OCI-LY7 (cell line): ENCODE measurements at regions of chr1 and their contacts with region 1.

Region 1: GRCh38 chr1:196148367-196148970 is 459.8 kb downstream of the KCNT2 start:
- DNase-seq: peak; percentile 29
- H3K4me3 ChIP-seq: no peak overlapping the region
- H3K27ac ChIP-seq: no peak overlapping the region
- H3K4me1 ChIP-seq: no peaks in the 10 kb centered on the region
- CTCF ChIP-seq: peak; percentile 87

Region 2: DNA sequence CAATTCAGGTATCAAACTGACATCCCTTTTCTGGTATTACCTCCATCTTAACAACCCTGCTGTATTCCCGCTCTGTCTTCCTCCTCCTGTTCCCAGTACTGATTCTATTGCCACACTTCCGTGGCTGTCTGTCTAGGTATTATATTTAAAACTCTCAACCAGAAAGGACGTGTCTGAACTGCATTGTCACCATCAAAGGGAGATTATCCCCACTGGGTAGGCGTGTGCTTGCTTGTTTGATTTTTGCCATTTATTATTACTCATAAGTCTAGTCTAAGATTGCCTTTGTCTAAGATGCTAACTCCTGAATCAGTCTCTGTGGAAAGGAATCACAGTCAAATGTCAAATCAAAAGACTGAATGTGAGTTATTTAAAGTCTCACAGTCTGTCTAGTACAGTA is 190.3 kb before region 1 on chr1:
- CTCF ChIA-PET with region 1: no interaction called
- POLR2A ChIA-PET with region 1: no interaction called
- intact Hi-C with region 1: no loop called
- DNase-seq: no peak
- H3K4me3 ChIP-seq: no peak overlapping the region
- H3K27ac ChIP-seq: no peak overlapping the region
- H3K4me1 ChIP-seq: no peaks in the 10 kb centered on the region
- CTCF ChIP-seq: no peak

Region 3: DNA sequence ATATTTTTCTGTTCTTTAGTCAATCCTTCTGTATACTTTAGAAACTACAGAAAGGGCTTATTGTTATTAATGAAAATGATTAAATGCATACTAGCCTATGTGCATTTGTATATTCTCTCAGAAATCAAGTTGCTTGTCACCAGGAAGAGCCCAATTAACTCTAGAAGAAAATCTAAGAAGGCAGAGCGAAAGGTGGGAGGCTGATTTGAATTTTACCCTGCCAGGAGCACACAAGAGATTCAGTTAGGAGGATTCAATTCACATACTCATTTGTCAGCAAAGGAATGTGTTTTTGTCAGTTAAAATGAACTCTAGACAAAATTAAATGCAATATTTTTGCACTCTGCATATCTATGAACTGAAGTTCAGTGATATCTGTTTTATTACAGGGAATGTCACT is 48.0 kb after region 1 on chr1:
- CTCF ChIA-PET with region 1: no interaction called
- POLR2A ChIA-PET with region 1: no interaction called
- intact Hi-C with region 1: no loop called
- DNase-seq: no peak
- H3K4me3 ChIP-seq: no peak overlapping the region
- H3K27ac ChIP-seq: no peak overlapping the region
- H3K4me1 ChIP-seq: no peaks in the 10 kb centered on the region
- CTCF ChIP-seq: no peak

Region 4: GRCh38 chr1:196209983-196210382 is 61.5 kb after region 1 on chr1:
- CTCF ChIA-PET with region 1: no interaction called
- POLR2A ChIA-PET with region 1: no interaction called
- intact Hi-C with region 1: no loop called
- DNase-seq: no peak
- H3K4me3 ChIP-seq: no peak overlapping the region
- H3K27ac ChIP-seq: no peak overlapping the region
- H3K4me1 ChIP-seq: no peaks in the 10 kb centered on the region
- CTCF ChIP-seq: no peak

Region 5: DNA sequence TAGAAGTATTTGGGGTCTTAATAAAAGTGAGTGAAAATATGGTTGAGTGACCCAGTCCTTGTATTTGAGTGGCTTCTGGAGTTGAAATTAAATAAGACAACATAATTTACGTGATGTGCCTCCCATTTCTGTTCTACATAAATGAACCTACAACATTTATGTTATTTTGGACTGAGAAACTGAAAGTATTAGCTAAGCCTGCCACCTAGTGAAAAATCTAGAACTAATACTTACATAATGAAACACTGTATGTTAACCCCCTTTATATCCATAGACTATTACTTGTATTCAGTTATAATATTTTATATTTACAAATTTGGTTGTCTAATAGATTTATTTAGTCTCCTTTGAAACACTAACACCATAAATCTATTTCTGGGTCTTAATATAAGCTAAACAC is 160.9 kb after region 1 on chr1:
- CTCF ChIA-PET with region 1: interaction called, 8 read pairs
- POLR2A ChIA-PET with region 1: interaction called, 3 read pairs
- intact Hi-C with region 1: loop called (anchors 1 kb)
- DNase-seq: peak; percentile 37
- H3K4me3 ChIP-seq: no peak overlapping the region
- H3K27ac ChIP-seq: no peak overlapping the region
- H3K4me1 ChIP-seq: no peaks in the 10 kb centered on the region
- CTCF ChIP-seq: peak; percentile 70

Region 6: GRCh38 chr1:196376630-196377328 is 228.3 kb after region 1 on chr1:
- CTCF ChIA-PET with region 1: no interaction called
- POLR2A ChIA-PET with region 1: no interaction called
- intact Hi-C with region 1: loop called (anchors 5 kb)
- DNase-seq: no peak
- H3K4me3 ChIP-seq: no peak overlapping the region
- H3K27ac ChIP-seq: no peak overlapping the region
- H3K4me1 ChIP-seq: no peaks in the 10 kb centered on the region
- CTCF ChIP-seq: no peak

Region 7: GRCh38 chr1:196660852-196661251 is 512.4 kb after region 1 on chr1:
- CTCF ChIA-PET with region 1: no interaction called
- POLR2A ChIA-PET with region 1: no interaction called
- intact Hi-C with region 1: loop called (anchors 5 kb)
- DNase-seq: peak; percentile 39
- H3K4me3 ChIP-seq: no peak overlapping the region
- H3K27ac ChIP-seq: no peak overlapping the region
- H3K4me1 ChIP-seq: no peaks in the 10 kb centered on the region
- CTCF ChIP-seq: peak; percentile 83